ENCODE measurements at regions of chr2 and their contacts with region 1.

Region 1: DNA sequence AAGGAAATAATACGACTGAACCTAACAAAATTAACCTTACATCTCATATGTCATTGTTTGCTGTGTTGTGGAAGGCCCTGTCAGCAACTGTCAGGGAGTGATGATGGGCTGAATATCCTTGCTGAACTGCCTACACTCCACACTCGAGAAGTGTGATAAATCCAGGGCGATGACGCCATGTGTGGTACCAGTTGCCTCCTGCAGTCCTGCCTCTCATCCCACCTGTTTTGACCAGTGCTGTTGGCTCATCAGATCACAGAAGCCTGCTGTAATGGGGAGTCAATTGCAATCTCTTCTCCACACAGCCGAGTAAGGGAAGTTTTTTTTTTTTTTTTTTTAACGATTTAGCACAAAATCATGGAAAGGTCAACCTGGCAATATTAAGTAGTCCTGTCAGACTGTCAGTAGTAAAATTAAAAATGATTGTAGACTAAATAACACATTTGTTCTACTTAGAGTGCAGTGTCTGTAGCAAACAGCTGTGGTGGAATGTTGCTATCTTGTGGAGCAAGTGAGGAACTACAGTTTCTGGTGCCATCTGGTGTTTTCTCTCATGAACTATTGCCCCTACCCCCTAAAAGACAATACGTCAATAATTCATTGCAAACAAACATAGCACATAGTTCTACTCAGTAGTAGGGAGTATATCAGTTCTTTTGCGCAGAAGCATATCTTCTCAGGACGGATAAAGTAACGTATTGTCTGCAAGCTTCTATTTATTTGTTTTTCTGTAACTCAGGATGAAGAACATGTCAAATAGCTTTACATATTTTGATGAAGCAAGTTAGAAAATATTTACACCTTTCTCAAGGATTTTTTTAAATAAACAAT is 347.6 kb downstream of the CTNNA2 start:
- ATAC-seq: peak; percentile 63 to 91 (median 84)
- H3K4me3 ChIP-seq: no peak overlapping the region
- H3K27ac ChIP-seq: no peak overlapping the region
- H3K4me1 ChIP-seq: peaks cover 9 to 13% of the 10 kb centered on the region in 2 donors

Region 2: DNA sequence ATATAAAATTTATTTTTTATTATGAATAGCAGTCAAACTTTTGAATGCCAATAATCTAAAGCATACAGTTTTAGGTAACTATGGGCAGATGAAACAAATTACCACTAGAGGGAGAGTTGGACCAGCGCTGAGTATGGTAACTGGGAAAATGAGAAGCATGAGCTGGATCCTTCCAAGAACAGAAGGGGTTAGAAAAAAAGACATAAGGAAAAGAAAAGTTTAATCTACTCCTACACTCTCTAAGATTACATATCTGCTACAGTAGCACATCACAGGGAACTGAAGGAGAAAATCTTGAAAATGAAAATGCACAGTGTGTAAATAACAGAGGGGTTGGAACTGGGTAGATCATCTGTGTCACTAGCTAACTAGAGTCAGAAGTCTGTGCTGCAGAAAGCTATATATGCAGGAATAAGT is 819.4 kb before region 1 on chr2:
- in situ Hi-C with region 1: loop called in 5 of 9 experiments (anchors 25 kb)
- ATAC-seq: peak; percentile 45 to 78 (median 60)
- H3K4me3 ChIP-seq: no peak overlapping the region
- H3K27ac ChIP-seq: no peak overlapping the region
- H3K4me1 ChIP-seq: no peaks in the 10 kb centered on the region

Region 3: GRCh38 chr2:79235135-79235534 is 625.3 kb before region 1 on chr2:
- in situ Hi-C with region 1: loop called in 1 of 9 experiments (anchors 25 kb)
- ATAC-seq: peak in 1 of 8 experiments; percentile 41
- H3K4me3 ChIP-seq: no peak overlapping the region
- H3K27ac ChIP-seq: no peak overlapping the region
- H3K4me1 ChIP-seq: no peaks in the 10 kb centered on the region

Region 4: GRCh38 chr2:79512442-79513401 is 347.7 kb before region 1 on chr2 and contains the start of gene CTNNA2:
- in situ Hi-C with region 1: loop called in 2 of 9 experiments (anchors 25 kb)
- ATAC-seq: peak in 7 of 8 experiments; percentile 67 to 91 (median 86)
- H3K4me3 ChIP-seq: peak within 1 kb of the TSS; percentile 59 to 96 (median 79)
- H3K27ac ChIP-seq: peak within 1 kb of the TSS; percentile 81 to 85
- H3K4me1 ChIP-seq: peaks cover 17 to 31% of the 10 kb centered on the region in 2 donors
- total RNA-seq, gene CTNNA2: 0.81 to 127 (median 56.5) TPM